Activated CD4-positive, alpha-beta T cell treated with anti-CD3 and anti-CD28 coated beads for 36 hours (primary cell): ENCODE measurements at regions of chr2 and their contacts with region 1.

Region 1: GRCh38 chr2:158489366-158490112 is 32.8 kb downstream of the PKP4 start:
- DNase-seq: no peak
- ATAC-seq: no peak
- H3K4me3 Mint-ChIP-seq: no peak overlapping the region
- H3K27ac Mint-ChIP-seq: no peak overlapping the region
- H3K4me1 Mint-ChIP-seq: peaks cover 11% of the 10 kb centered on the region
- H3K27me3 Mint-ChIP-seq: no peaks in the 10 kb centered on the region

Region 2: DNA sequence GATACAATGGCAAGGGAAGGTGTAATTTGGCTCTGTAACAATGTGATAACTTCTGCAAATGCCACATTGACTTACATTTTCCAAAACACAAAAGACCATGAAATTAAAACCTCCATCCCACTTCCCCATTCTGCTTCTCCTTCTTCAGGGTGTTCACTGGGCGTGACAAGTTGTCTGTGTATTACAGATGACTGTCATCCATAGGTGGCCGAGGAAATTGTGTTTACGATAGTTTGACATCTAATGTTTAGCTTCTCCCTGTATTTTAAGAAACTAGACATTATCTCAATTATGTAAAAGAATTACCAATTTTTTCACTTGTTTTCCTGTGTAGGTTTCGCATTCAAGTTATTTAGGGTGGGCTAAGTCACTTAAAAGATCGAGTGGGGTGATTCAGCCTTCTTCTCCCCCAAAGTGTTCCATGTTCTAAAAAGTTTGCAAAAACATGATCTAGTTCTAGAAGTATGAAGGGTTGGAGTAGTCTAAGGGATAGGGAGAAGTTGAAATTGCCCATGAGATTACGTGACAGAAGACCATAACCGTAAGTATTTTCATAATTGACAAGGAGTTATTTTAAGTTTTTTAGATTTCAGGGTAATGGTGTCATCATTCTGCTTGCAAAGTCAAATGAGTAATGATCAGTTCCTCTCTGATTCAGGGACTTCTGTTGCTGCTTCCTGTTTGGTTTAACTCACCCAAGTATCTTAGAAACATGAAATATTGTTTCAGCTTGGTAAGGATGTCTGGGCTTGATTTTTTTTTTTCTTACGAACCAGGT is 1020.4 kb before region 1 on chr2:
- CTCF ChIA-PET with region 1: no interaction called
- POLR2A ChIA-PET with region 1: no interaction called
- intact Hi-C with region 1: no loop called
- DNase-seq: no peak
- ATAC-seq: peak; percentile 67
- H3K4me3 Mint-ChIP-seq: peak overlapping the region; percentile 68
- H3K27ac Mint-ChIP-seq: peak overlapping the region; percentile 94
- H3K4me1 Mint-ChIP-seq: peaks cover 95% of the 10 kb centered on the region
- H3K27me3 Mint-ChIP-seq: no peaks in the 10 kb centered on the region

Region 3: DNA sequence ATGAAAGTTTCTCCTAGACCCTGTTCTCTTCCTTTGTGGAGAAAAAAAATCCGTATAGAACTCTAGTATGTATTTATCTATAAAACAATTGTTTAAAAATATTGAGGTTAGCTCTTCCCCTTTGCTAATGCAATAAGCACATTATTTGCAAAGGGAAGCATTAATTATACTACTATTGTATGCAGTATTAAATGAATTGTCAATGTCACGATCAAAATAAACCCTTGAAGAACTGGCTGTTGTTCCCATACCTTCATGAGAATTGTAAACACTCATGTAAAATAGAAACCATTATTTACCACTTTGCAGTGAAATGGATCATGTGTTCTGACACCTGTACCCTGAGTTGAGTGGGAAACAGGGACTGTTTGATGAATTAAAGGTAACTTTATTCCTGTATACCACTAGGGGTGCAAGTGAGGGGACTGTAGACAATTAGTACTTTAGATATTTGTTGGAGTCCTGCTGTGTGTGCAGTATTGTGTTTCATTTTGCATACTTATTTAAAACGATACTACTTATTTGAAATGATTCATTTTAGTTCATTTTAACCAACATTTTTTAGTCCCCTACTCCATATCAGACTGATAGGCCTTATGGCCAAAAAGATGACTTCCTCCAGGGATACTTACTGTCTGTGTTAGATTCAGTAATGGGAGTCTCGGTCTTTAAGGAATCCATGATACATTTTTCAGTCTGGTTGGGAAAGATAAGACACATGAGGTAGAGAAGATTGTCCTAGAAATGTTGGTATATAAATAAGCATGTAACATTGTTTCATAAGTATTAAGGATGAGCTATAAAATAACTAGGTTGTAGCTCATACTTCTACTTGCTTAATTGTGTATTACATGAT is 24.9 kb before region 1 on chr2:
- CTCF ChIA-PET with region 1: interaction called, 15 read pairs
- POLR2A ChIA-PET with region 1: no interaction called
- intact Hi-C with region 1: no loop called
- DNase-seq: no peak
- ATAC-seq: peak; percentile 72
- H3K4me3 Mint-ChIP-seq: no peak overlapping the region
- H3K27ac Mint-ChIP-seq: no peak overlapping the region
- H3K4me1 Mint-ChIP-seq: peaks cover 19% of the 10 kb centered on the region
- H3K27me3 Mint-ChIP-seq: no peaks in the 10 kb centered on the region